ENCODE measurements at regions of chr17 and their contacts with region 1.

Region 1: GRCh38 chr17:37239690-37240334 is 136.0 kb upstream of the C17orf78 start:
- DNase-seq: peak; percentile 23
- ATAC-seq: no peak
- H3K4me3 Mint-ChIP-seq: no peak overlapping the region
- H3K27ac Mint-ChIP-seq: no peak overlapping the region
- H3K4me1 Mint-ChIP-seq: no peaks in the 10 kb centered on the region
- H3K27me3 Mint-ChIP-seq: no peaks in the 10 kb centered on the region

Region 2: GRCh38 chr17:37220607-37220953 is 19.2 kb before region 1 on chr17:
- CTCF ChIA-PET with region 1: interaction called, 11 read pairs
- POLR2A ChIA-PET with region 1: interaction called, 3 read pairs
- DNase-seq: peak; percentile 53
- ATAC-seq: no peak
- H3K4me3 Mint-ChIP-seq: no peak overlapping the region
- H3K27ac Mint-ChIP-seq: no peak overlapping the region
- H3K4me1 Mint-ChIP-seq: peaks cover 8% of the 10 kb centered on the region
- H3K27me3 Mint-ChIP-seq: no peaks in the 10 kb centered on the region

Region 3: GRCh38 chr17:37255432-37255831 is 15.6 kb after region 1 on chr17:
- CTCF ChIA-PET with region 1: interaction called, 19 read pairs
- POLR2A ChIA-PET with region 1: no interaction called
- DNase-seq: no peak
- ATAC-seq: no peak
- H3K4me3 Mint-ChIP-seq: no peak overlapping the region
- H3K27ac Mint-ChIP-seq: no peak overlapping the region
- H3K4me1 Mint-ChIP-seq: no peaks in the 10 kb centered on the region
- H3K27me3 Mint-ChIP-seq: no peaks in the 10 kb centered on the region